Heart left ventricle (tissue), 16 donors: ENCODE measurements at regions of chr10 and their contacts with region 1.

Region 1: DNA sequence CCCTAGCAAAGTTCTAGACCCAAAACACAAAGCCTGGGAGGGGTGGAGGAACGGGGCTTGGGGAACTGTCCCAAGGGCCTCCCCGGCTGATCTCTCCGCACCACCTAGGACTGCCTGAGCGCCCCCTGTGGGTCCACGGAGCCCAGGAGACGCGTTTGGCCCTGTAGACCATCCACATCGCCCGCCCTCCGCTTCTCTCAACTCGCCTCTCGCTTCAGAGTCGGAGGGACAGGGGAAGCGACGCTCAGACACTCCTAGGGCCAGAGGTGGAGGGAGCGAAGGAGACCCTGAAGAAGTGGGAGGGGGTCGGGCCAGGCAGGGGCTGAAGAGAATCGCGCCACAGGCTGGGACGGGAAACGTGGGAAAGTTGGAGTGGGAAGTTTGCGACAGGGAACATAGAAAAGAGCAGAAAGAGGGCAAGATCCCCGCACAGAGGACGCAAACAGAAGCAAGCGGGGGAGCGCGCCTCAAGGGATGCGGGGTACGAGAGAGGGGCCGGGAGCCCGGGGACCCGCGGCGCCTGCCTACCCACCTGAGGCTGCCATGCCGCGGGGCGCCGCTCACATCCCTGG is 378 bp downstream of the PIK3AP1 start:
- DNase-seq: peak; percentile 56 to 89 (median 70)
- ATAC-seq: peak; percentile 34 to 77 (median 76)
- H3K4me3 ChIP-seq: peak overlapping the region; percentile 37 to 75 (median 58)
- H3K27ac ChIP-seq: peak overlapping the region in 8 of 12 donors; percentile 1 to 89 (median 38)
- H3K4me1 ChIP-seq: peaks cover 0 to 40% (median 5%) of the 10 kb centered on the region in 12 donors
- H3K27me3 ChIP-seq: peaks cover 0 to 9% (median 0%) of the 10 kb centered on the region in 9 donors
- CTCF ChIP-seq: peak in 9 of 12 donors; percentile 10 to 50 (median 35)
- POLR2A ChIP-seq: no peak

Region 2: GRCh38 chr10:96651998-96652431 is 67.9 kb before region 1 on chr10:
- intact Hi-C with region 1: loop called in 2 of 10 experiments (anchors 10 kb)
- DNase-seq: peak in 3 of 5 donors; percentile 31 to 35 (median 35)
- ATAC-seq: peak in 1 of 4 donors; percentile 73
- H3K4me3 ChIP-seq: no peak overlapping the region
- H3K27ac ChIP-seq: peak overlapping the region in 1 of 12 donors; percentile 69
- H3K4me1 ChIP-seq: peaks cover 0 to 48% (median 0%) of the 10 kb centered on the region in 12 donors
- H3K27me3 ChIP-seq: peaks cover 0 to 4% (median 0%) of the 10 kb centered on the region in 9 donors
- CTCF ChIP-seq: no peak
- POLR2A ChIP-seq: no peak